ENCODE measurements at regions of chr4 and their contacts with region 1.

Region 1: DNA sequence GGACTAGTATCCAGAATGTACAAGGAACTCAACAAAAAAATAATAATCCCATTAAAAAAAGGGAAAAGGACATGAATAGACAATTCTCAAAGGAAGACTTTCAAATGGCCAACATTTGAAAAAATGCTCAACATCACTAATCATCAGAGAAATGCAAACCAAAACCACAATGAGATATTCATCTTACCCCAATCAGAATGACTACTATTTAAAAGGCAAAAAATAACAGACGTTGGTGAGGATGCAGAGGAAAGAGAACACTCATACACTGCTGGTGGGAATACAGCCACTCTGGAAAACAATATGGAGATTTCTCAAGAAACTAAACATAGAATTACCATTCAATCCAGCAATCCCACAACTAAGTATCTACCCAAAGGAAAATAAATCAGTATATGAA is 133.1 kb downstream of the KDR start:
- DNase-seq: no peak
- H3K4me3 ChIP-seq: no peak overlapping the region
- H3K27ac ChIP-seq: no peak overlapping the region
- H3K4me1 ChIP-seq: no peaks in the 10 kb centered on the region
- H3K27me3 ChIP-seq: peaks cover 7% of the 10 kb centered on the region; the same call in 1 of the 2 replicates

Region 2: GRCh38 chr4:54742636-54743399 is 249.4 kb before region 1 on chr4:
- in situ Hi-C with region 1: no loop called
- DNase-seq: no peak
- H3K4me3 ChIP-seq: no peak overlapping the region
- H3K27ac ChIP-seq: no peak overlapping the region
- H3K4me1 ChIP-seq: no peaks in the 10 kb centered on the region
- H3K27me3 ChIP-seq: peaks cover 6% of the 10 kb centered on the region

Region 3: GRCh38 chr4:55143863-55144262 is 151.6 kb after region 1 on chr4:
- in situ Hi-C with region 1: no loop called
- DNase-seq: no peak
- H3K4me3 ChIP-seq: no peak overlapping the region
- H3K27ac ChIP-seq: no peak overlapping the region
- H3K4me1 ChIP-seq: no peaks in the 10 kb centered on the region
- H3K27me3 ChIP-seq: no peaks in the 10 kb centered on the region

Region 4: GRCh38 chr4:55318175-55319129 is 326.2 kb after region 1 on chr4:
- in situ Hi-C with region 1: loop called (anchors 5 kb)
- DNase-seq: peak; percentile 56
- H3K4me3 ChIP-seq: no peak overlapping the region
- H3K27ac ChIP-seq: no peak overlapping the region
- H3K4me1 ChIP-seq: no peaks in the 10 kb centered on the region
- H3K27me3 ChIP-seq: no peaks in the 10 kb centered on the region